GM10248 (cell line): ENCODE measurements at regions of chr11 and their contacts with region 1.

Region 1: GRCh38 chr11:81644239-81644840 is 1089.3 kb downstream of the FAM181B start:
- DNase-seq: peak; percentile 29
- CTCF ChIP-seq: peak; percentile 45

Region 2: DNA sequence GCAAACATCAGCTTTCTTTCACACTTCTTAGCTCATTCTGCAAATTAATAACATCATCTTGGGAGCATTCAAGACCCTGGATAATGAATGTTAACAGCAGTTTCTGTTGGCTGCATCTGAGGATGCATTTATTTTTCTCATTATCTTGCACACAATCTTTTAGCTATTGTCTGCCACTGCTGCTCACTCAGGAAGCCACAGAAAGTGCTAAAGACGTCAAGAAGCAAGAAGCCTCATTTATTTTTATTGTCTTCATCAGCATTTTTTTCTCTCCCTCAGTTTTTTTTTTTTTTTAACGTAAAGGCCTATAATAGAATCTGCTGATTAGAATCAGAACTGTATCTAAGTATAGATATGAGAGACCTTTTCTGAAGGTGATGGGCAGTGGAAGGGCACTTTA is 250.0 kb before region 1 on chr11:
- CTCF ChIA-PET with region 1: no interaction called
- POLR2A ChIA-PET with region 1: no interaction called
- DNase-seq: no peak
- CTCF ChIP-seq: no peak

Region 3: GRCh38 chr11:82225930-82226329 is 581.6 kb after region 1 on chr11:
- CTCF ChIA-PET with region 1: interaction called, 14 read pairs
- POLR2A ChIA-PET with region 1: no interaction called
- DNase-seq: no peak
- CTCF ChIP-seq: no peak